GM12878 (cell line): ENCODE measurements at regions of chr6 and their contacts with region 1.

Region 1: GRCh38 chr6:593139-593906 is 63.6 kb downstream of the HUS1B start:
- DNase-seq: peak; percentile 13
- ATAC-seq: peak; percentile 85
- H3K4me3 ChIP-seq: no peak overlapping the region
- H3K27ac ChIP-seq: no peak overlapping the region
- H3K4me1 ChIP-seq: no peaks in the 10 kb centered on the region
- H3K27me3 ChIP-seq: no peaks in the 10 kb centered on the region
- CTCF ChIP-seq: peak; percentile 38 to 67 (median 42); a peak in 5 of 6 replicates
- EP300 ChIP-seq: no peak
- POLR2A ChIP-seq: no peak
- RAD21 ChIP-seq: peak; percentile 81

Region 2: DNA sequence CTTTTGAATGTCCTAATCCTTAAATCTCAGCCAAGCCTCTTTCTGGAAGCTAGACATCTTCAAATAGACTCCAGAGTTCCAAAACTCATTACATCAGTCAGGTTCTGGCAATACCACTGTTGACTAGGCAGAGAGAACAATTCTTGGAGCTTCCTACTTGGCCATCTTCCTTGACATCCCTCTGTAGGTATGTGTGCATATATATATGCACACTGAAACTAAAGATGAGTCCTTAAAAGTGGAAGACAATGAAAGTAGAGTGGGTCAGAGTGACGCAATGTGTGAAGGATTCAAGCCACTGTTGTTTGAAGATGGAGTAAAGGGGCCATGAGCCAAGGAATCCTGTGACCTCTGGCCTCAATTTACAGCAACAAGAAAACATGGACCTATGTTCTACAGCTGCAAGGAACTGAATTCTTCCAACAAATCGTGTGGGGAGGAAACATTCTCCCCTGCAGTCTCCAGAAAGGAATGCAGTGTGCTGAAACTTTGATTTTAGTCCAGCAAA is 319.7 kb before region 1 on chr6:
- CTCF ChIA-PET with region 1: no interaction called
- POLR2A ChIA-PET with region 1: no interaction called
- RAD21 ChIA-PET with region 1: no interaction called
- SMC1A ChIA-PET with region 1: no interaction called
- in situ Hi-C with region 1: no loop called
- intact Hi-C with region 1: no loop called
- DNase-seq: no peak
- ATAC-seq: no peak
- H3K4me3 ChIP-seq: no peak overlapping the region
- H3K27ac ChIP-seq: no peak overlapping the region
- H3K4me1 ChIP-seq: peaks cover 19% of the 10 kb centered on the region
- H3K27me3 ChIP-seq: no peaks in the 10 kb centered on the region
- CTCF ChIP-seq: no peak
- EP300 ChIP-seq: no peak
- POLR2A ChIP-seq: no peak
- RAD21 ChIP-seq: no peak

Region 3: DNA sequence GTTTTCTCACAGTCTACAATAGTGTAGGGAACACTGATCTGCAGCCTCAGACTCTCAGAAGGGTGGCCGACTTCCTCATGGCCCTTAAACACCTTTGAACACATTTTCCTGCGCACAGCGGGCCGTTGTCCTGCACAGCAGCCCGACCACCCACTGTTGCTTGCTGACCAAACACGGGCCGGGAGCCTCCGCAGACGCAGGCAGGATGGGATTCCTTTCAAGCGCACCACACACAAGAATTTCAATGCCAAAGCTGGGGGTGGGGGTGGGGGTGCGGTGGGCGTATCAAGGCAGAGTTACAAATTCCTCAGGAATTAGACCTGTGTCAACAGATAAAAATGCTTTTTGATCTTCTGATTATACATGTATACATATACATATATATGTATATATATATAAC is 11.0 kb before region 1 on chr6:
- CTCF ChIA-PET with region 1: interaction called, 22 read pairs
- POLR2A ChIA-PET with region 1: no interaction called
- RAD21 ChIA-PET with region 1: interaction called, 5 read pairs
- SMC1A ChIA-PET with region 1: interaction called, 9 read pairs
- in situ Hi-C with region 1: no loop called
- intact Hi-C with region 1: no loop called
- DNase-seq: no peak
- ATAC-seq: no peak
- H3K4me3 ChIP-seq: no peak overlapping the region
- H3K27ac ChIP-seq: no peak overlapping the region
- H3K4me1 ChIP-seq: no peaks in the 10 kb centered on the region
- H3K27me3 ChIP-seq: no peaks in the 10 kb centered on the region
- CTCF ChIP-seq: no peak
- EP300 ChIP-seq: no peak
- POLR2A ChIP-seq: no peak
- RAD21 ChIP-seq: no peak

Region 4: DNA sequence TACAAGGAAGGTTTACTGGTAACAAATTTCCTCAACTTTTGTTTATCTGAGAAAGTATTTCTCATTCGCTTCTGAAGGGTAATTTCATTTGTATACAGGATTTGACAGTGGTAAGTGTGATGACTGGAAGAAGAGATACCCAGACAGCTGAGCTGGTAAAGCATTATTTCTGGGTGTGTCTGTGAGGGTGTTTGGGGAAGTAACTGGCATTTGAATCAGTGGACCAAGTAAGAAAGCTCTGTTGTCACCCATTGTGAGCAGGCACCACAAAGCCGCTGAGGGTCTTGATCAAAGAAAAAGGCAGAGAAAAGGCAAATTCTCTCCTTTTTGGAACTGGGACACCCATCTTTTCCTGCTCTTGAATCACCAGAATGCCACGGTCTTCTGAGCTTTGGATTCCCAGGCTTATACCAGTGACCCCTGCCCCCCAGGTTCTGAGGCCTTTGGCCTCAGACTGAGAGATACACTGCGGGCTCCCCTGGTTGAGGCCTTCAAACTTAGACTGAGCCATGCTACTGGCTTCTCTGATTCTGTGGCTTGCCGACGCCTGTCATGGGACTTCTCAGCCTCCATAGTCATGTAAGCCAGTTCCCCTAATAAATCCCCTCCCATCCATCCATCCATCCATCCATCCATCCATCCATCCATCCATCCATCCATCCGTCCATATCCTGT is 74.1 kb after region 1 on chr6:
- CTCF ChIA-PET with region 1: no interaction called
- POLR2A ChIA-PET with region 1: no interaction called
- RAD21 ChIA-PET with region 1: no interaction called
- SMC1A ChIA-PET with region 1: no interaction called
- in situ Hi-C with region 1: no loop called
- intact Hi-C with region 1: no loop called
- DNase-seq: no peak
- ATAC-seq: no peak
- H3K4me3 ChIP-seq: no peak overlapping the region
- H3K27ac ChIP-seq: no peak overlapping the region
- H3K4me1 ChIP-seq: no peaks in the 10 kb centered on the region
- H3K27me3 ChIP-seq: no peaks in the 10 kb centered on the region
- CTCF ChIP-seq: no peak
- EP300 ChIP-seq: no peak
- POLR2A ChIP-seq: no peak
- RAD21 ChIP-seq: no peak

Region 5: DNA sequence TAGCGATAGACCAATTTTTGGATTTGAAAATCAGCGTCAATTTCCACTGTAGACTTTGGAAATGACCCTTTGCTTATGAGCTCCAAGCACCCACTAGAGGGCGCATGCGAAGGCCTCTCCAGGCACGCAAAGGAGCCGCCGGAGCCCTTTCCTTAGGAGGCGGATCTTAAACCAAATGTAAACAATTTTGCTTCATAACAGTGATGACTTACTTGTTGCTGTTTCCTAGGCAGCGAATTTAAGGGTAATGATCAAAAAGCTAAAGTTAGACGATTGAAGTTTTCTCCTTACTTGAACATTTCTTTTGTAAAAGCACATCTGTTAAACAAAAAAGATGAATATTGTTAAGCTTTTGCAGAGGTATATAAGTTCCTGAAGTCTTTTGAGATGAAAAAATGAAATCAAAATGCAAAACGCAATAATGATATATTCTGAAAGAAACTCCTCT is 128.8 kb after region 1 on chr6:
- CTCF ChIA-PET with region 1: interaction called, 43 read pairs
- POLR2A ChIA-PET with region 1: no interaction called
- RAD21 ChIA-PET with region 1: interaction called, 24 read pairs
- SMC1A ChIA-PET with region 1: interaction called, 21 read pairs
- in situ Hi-C with region 1: no loop called
- intact Hi-C with region 1: loop called (anchors 5 kb)
- DNase-seq: no peak
- ATAC-seq: peak; percentile 98
- H3K4me3 ChIP-seq: no peak overlapping the region
- H3K27ac ChIP-seq: no peak overlapping the region
- H3K4me1 ChIP-seq: no peaks in the 10 kb centered on the region
- H3K27me3 ChIP-seq: no peaks in the 10 kb centered on the region; a peak in 1 of 4 replicates
- CTCF ChIP-seq: peak; percentile 89 to 96 (median 92)
- EP300 ChIP-seq: no peak
- POLR2A ChIP-seq: no peak
- RAD21 ChIP-seq: peak; percentile 67

Region 6: DNA sequence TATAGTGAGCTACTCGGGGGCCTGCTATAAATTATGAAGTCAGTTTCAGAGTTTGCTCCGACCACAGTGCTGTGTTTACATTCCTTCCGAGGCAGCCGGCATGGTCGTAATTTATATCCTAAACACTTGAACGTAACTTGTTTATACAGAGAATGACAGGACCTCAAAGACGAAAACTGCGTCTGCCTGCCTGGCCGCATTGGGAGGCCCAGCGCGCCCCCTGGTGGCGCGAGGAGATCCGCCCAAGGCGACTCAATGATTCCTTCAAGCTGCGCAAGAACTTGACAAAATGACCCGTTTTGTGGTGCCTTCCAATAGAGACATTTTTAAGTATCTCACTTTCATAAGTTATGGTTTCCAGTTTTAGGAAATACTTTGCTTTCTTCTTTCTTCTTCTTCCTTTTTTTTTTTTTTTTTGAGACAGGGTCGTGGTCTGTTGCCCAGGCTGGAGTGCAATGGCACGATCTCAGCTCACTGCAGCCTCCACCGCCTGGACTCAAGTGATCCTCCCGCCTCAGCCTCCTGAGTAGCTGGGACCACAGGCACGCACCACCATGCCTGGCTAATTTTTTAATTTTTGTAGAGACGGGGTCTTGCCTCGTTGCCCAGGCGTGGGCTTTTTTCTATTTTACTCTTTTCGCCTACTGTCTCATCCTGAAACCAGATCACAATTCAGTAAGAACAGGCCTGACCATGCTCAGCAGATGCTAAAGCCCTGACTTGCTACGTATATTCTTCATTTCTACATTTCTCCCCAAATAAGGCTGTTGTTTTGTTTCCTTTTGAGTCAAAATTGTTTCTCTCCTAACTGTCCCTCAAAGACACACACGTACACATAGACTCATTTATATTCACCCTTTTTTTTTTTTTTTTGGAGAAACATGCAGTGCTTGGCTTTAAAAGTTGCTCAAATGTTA is 803.9 kb after region 1 on chr6:
- CTCF ChIA-PET with region 1: interaction called, 22 read pairs
- POLR2A ChIA-PET with region 1: no interaction called
- RAD21 ChIA-PET with region 1: interaction called, 12 read pairs
- SMC1A ChIA-PET with region 1: interaction called, 3 read pairs
- in situ Hi-C with region 1: loop called (anchors 5 kb)
- intact Hi-C with region 1: loop called (anchors 1 kb)
- DNase-seq: peak; percentile 43
- ATAC-seq: peak; percentile 92
- H3K4me3 ChIP-seq: no peak overlapping the region
- H3K27ac ChIP-seq: no peak overlapping the region
- H3K4me1 ChIP-seq: no peaks in the 10 kb centered on the region
- H3K27me3 ChIP-seq: peaks cover 11 to 17% of the 10 kb centered on the region in 2 experiments
- CTCF ChIP-seq: peak; percentile 88 to 98 (median 97)
- EP300 ChIP-seq: peak; percentile 58 to 74; a peak in 2 of 4 replicates
- POLR2A ChIP-seq: no peak
- RAD21 ChIP-seq: peak; percentile 80